A549 (cell line): ENCODE measurements at regions of chr5 and their contacts with region 1.

Region 1: GRCh38 chr5:66306105-66306843 is 162.2 kb downstream of the SREK1 start:
- DNase-seq: peak; percentile 66 to 77
- ATAC-seq: peak; percentile 79 to 92
- H3K4me3 ChIP-seq: no peak overlapping the region
- H3K27ac ChIP-seq: no peak overlapping the region
- H3K4me1 ChIP-seq: no peaks in the 10 kb centered on the region
- CTCF ChIP-seq: peak; percentile 64
- EP300 ChIP-seq: no peak
- POLR2A ChIP-seq: no peak
- RAD21 ChIP-seq: peak; percentile 50 to 57

Region 2: DNA sequence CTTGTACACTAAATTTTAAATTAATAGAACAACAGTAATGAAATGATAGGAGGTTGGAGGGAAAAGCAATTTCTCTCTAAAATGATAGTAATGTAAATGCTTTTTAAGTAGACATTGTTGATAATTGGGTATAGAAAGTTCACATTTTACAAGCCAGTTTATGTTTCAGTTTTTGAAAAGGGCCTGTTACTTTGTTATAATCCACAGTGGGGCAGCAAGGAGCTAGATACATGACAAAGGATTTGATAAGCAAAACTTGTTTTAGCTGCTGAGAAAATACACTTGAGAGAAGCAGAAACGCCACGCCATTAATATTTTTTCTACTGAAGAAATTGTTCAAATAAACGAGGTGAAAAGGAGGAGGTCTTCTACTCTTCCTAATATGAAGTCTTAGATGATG is 131.9 kb before region 1 on chr5:
- CTCF ChIA-PET with region 1: interaction called, 13 read pairs
- POLR2A ChIA-PET with region 1: no interaction called
- DNase-seq: peak in 1 of 2 experiments; percentile 39
- ATAC-seq: peak; percentile 59 to 67; a peak in 3 of 6 replicates
- H3K4me3 ChIP-seq: no peak overlapping the region
- H3K27ac ChIP-seq: no peak overlapping the region
- H3K4me1 ChIP-seq: peaks cover 3% of the 10 kb centered on the region; the same call in 1 of the 3 replicates
- CTCF ChIP-seq: no peak; the same call in 1 of the 3 replicates
- EP300 ChIP-seq: no peak
- POLR2A ChIP-seq: no peak
- RAD21 ChIP-seq: peak; percentile 35 to 47; a peak in 3 of 5 replicates

Region 3: DNA sequence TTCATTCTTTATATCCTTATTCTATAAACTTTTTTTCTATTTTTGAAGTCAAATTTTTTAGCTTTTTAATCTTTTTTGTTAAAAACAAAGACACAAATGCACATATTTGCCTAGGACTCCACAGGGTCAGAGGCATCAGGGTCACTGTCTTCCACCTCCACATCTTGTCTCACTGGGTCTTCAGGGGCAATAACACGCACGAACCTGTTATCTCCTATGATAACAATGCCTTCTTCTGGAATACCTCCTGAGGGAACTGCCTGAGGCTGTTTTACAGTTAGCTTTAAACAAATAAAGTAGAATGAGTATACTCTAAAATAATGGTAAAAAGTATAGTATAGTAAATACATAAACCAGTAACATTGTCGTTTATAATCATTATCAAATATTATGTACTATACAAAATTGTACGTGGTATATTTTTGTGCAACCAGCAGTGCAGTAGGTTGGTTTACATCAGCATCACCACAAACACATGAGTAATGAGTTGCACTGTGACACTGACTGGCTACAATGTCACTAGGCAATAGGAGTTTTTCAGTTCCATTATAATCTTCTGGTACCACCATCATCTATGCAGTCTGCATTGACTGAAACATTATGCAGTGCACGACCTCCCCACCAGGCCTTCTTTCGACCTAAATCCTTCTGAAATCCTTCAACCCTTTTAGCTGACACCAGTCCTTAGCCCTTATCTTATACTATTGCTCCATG is 56.5 kb before region 1 on chr5:
- CTCF ChIA-PET with region 1: interaction called, 14 read pairs
- POLR2A ChIA-PET with region 1: no interaction called
- DNase-seq: no peak
- ATAC-seq: no peak
- H3K4me3 ChIP-seq: no peak overlapping the region
- H3K27ac ChIP-seq: no peak overlapping the region
- H3K4me1 ChIP-seq: peaks cover 21% of the 10 kb centered on the region
- CTCF ChIP-seq: no peak
- EP300 ChIP-seq: no peak
- POLR2A ChIP-seq: no peak
- RAD21 ChIP-seq: no peak

Region 4: DNA sequence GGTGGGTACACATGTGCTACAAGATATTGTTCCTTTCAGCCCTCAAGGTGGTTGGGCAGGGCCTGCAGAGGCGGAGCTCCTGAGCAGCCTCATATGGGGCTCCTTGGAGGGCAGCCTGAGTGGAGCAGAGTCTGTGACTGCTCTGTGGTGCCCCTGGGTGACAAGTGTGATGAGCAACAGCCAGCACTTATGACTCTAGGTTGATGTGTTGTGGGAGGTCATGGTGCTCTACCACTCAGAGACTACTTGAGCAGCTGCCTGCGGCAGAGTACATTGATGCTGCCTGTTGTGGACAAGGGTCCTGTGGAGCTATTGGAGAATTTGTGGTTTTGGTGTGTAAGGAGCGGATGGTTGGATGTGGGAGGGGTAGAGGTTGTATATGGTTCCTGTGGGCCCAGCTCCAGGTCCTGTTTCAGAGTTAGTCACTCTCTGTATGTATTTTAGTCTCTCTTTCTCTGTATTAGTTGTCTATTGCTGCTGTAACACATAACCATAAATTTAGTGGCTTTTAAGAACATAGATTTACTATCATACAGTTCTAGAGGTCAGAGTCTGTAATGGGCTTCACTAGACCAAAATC is 20.8 kb before region 1 on chr5:
- CTCF ChIA-PET with region 1: interaction called, 14 read pairs
- POLR2A ChIA-PET with region 1: no interaction called
- DNase-seq: no peak
- ATAC-seq: 0 out of 6 replicates have a peak, but pooled peaks of 1 of the 2 experiments have one; percentile 51
- H3K4me3 ChIP-seq: no peak overlapping the region
- H3K27ac ChIP-seq: no peak overlapping the region
- H3K4me1 ChIP-seq: no peaks in the 10 kb centered on the region
- CTCF ChIP-seq: no peak
- EP300 ChIP-seq: no peak
- POLR2A ChIP-seq: no peak
- RAD21 ChIP-seq: no peak

Region 5: DNA sequence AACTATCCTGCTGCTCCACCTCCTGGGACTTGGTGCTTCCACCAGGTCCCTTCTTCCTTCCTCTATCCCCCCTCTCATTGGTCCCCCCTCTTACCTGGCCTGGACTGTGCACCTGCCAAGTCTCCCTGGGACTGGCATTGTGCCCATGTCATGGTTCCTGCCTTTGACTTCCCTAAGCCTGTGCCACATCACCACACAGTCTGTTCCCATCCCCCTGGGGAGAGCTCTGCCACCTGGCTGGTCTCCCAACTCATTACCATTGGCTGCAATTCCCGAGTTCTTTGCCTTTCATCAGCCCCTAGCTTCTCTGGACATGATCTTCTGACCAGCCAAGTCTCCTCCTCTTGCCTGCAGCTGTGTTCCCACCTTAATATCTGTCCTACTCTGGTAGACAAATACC is 18.1 kb after region 1 on chr5:
- CTCF ChIA-PET with region 1: interaction called, 113 read pairs
- POLR2A ChIA-PET with region 1: no interaction called
- DNase-seq: no peak
- ATAC-seq: no peak
- H3K4me3 ChIP-seq: no peak overlapping the region
- H3K27ac ChIP-seq: no peak overlapping the region
- H3K4me1 ChIP-seq: no peaks in the 10 kb centered on the region
- CTCF ChIP-seq: no peak
- EP300 ChIP-seq: no peak
- POLR2A ChIP-seq: no peak
- RAD21 ChIP-seq: no peak

Region 6: DNA sequence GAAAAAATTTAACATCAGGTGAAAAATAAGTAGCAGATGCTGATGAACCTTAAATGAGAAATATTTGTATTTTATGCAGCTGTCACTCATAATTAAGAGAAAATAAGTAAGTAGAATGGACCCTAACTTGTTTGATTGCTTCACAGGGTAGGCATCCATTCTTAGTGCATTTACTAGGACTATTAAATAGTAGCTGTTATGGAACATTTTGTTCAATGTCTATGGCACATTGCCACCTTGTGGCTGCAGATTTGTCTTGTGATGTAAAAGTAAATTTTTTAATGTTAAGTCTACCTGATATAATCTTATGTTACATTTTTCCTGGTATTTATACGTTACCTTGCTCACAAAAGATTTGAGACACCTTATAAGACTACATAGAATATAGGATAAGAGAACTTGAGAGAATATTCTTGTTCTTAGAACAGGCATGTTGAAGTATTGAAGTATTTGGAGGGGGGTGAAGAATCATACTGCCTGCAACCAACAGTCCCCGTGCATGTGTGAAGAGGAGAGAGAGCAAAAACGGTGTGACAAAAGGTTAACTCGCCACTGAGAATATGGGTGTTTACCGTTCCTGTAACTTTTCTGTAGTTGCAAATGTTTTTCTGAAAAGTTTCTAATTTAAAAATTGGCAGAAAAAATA is 451.0 kb after region 1 on chr5:
- CTCF ChIA-PET with region 1: interaction called, 108 read pairs
- POLR2A ChIA-PET with region 1: interaction called, 4 read pairs
- DNase-seq: peak; percentile 7 to 61
- ATAC-seq: peak; percentile 66 to 77; a peak in 4 of 6 replicates
- H3K4me3 ChIP-seq: no peak overlapping the region
- H3K27ac ChIP-seq: no peak overlapping the region
- H3K4me1 ChIP-seq: no peaks in the 10 kb centered on the region
- CTCF ChIP-seq: peak; percentile 64
- EP300 ChIP-seq: no peak
- POLR2A ChIP-seq: no peak
- RAD21 ChIP-seq: peak; percentile 69 to 73

Region 7: GRCh38 chr5:67246108-67246507 is 939.8 kb after region 1 on chr5:
- CTCF ChIA-PET with region 1: no interaction called
- POLR2A ChIA-PET with region 1: no interaction called
- DNase-seq: peak; percentile 5 to 71
- ATAC-seq: peak; percentile 54 to 72; a peak in 4 of 6 replicates
- H3K4me3 ChIP-seq: no peak overlapping the region
- H3K27ac ChIP-seq: peak overlapping the region in 1 of 2 experiments; percentile 18; a peak in 1 of 6 replicates
- H3K4me1 ChIP-seq: no peaks in the 10 kb centered on the region
- CTCF ChIP-seq: peak; percentile 88
- EP300 ChIP-seq: no peak
- POLR2A ChIP-seq: no peak
- RAD21 ChIP-seq: peak; percentile 82 to 91